ENCODE measurements at regions of chr16 and their contacts with region 1.

Region 1: GRCh38 chr16:81006814-81007696 is at the starts of genes CENPN and CMC2:
- DNase-seq: peak; percentile 88 to 95
- H3K4me3 ChIP-seq: peak within 1 kb of the TSS; percentile 82 to 98 (median 91)
- H3K27ac ChIP-seq: peak within 1 kb of the TSS; percentile 100
- H3K4me1 ChIP-seq: peaks cover 0 to 9% (median 2%) of the 10 kb centered on the region in 4 experiments; a peak in 2 of 7 replicates
- H3K27me3 ChIP-seq: no peaks in the 10 kb centered on the region
- CTCF ChIP-seq: no peak
- EP300 ChIP-seq: peak in 1 of 2 experiments; percentile 99; a peak in 2 of 3 replicates
- POLR2A ChIP-seq: peak; percentile 85 to 97
- RAD21 ChIP-seq: no peak
- total RNA-seq, gene CENPN: 57.2 and 67.0 TPM in 2 replicates
- total RNA-seq, gene CMC2: 66.6 and 69.3 TPM in 2 replicates

Region 2: DNA sequence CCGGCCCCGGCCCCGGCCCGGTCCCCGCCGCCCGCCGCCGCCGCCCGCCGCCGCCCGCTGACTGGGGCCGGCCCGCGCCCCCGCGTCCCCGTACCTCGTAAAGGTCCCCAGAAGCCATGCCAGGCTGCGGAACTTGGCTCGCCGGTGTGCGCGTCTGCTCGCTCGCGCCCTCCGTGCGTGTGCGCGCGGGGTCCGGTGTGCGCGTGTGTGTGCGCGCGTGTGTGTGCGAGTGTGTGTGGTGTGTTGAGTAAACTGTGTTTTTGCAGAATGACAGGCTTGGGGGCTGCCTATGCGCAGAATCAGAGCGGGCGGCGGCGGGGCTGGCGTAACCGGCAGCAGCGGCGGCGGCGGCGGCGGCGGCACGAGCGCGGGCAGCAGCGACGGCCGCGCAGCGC is 203.0 kb before region 1 on chr16:
- CTCF ChIA-PET with region 1: no interaction called
- POLR2A ChIA-PET with region 1: no interaction called
- DNase-seq: peak in 1 of 2 experiments; percentile 65
- H3K4me3 ChIP-seq: peak overlapping the region; percentile 45 to 82 (median 58); a peak in 7 of 8 replicates
- H3K27ac ChIP-seq: no peak overlapping the region
- H3K4me1 ChIP-seq: no peaks in the 10 kb centered on the region; a peak in 1 of 7 replicates
- H3K27me3 ChIP-seq: peaks cover 3 to 27% (median 16%) of the 10 kb centered on the region in 4 experiments
- CTCF ChIP-seq: no peak
- EP300 ChIP-seq: no peak
- POLR2A ChIP-seq: no peak
- RAD21 ChIP-seq: no peak

Region 3: DNA sequence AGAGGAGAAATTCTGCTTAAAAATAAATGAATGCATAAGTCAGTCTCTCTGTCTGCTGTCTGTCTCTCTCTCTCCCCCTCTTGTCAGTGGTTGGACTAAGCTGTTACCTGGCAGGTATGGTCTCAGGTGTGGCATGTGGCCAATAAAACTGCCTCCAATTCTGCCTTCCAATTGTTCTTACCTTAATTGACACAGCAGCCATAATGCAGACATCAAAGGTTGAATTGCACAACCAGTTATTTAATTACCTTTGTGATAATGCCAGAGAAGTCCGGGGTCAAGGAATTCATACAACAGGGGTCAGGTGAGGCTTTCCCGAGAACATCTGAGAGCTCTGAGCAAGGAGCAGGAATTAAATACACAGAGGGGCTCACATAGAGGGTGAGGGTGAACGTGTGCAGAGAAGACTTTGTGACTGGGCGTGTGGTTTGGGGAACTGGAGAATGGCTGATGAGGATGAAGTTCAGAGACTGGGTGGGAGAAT is 123.9 kb before region 1 on chr16:
- CTCF ChIA-PET with region 1: no interaction called
- POLR2A ChIA-PET with region 1: no interaction called
- DNase-seq: no peak
- H3K4me3 ChIP-seq: no peak overlapping the region
- H3K27ac ChIP-seq: no peak overlapping the region
- H3K4me1 ChIP-seq: no peaks in the 10 kb centered on the region
- H3K27me3 ChIP-seq: no peaks in the 10 kb centered on the region
- CTCF ChIP-seq: no peak
- EP300 ChIP-seq: no peak
- POLR2A ChIP-seq: no peak
- RAD21 ChIP-seq: no peak

Region 4: GRCh38 chr16:80993307-80993706 is 13.7 kb before region 1 on chr16:
- CTCF ChIA-PET with region 1: interaction called, 83 read pairs
- POLR2A ChIA-PET with region 1: interaction called, 4 read pairs
- DNase-seq: no peak
- H3K4me3 ChIP-seq: no peak overlapping the region
- H3K27ac ChIP-seq: no peak overlapping the region
- H3K4me1 ChIP-seq: no peaks in the 10 kb centered on the region
- H3K27me3 ChIP-seq: no peaks in the 10 kb centered on the region; a peak in 2 of 7 replicates
- CTCF ChIP-seq: no peak
- EP300 ChIP-seq: no peak
- POLR2A ChIP-seq: no peak
- RAD21 ChIP-seq: no peak

Region 5: GRCh38 chr16:81018496-81018895 is 11.4 kb after region 1 on chr16:
- CTCF ChIA-PET with region 1: interaction called, 13 read pairs
- POLR2A ChIA-PET with region 1: interaction called, 5 read pairs
- DNase-seq: no peak
- H3K4me3 ChIP-seq: no peak overlapping the region
- H3K27ac ChIP-seq: no peak overlapping the region
- H3K4me1 ChIP-seq: no peaks in the 10 kb centered on the region
- H3K27me3 ChIP-seq: no peaks in the 10 kb centered on the region
- CTCF ChIP-seq: no peak
- EP300 ChIP-seq: no peak
- POLR2A ChIP-seq: no peak
- RAD21 ChIP-seq: no peak

Region 6: GRCh38 chr16:81035398-81035974 is 28.4 kb after region 1 on chr16 and contains the start of gene ATMIN:
- CTCF ChIA-PET with region 1: interaction called, 4 read pairs
- POLR2A ChIA-PET with region 1: interaction called, 24 read pairs
- DNase-seq: peak; percentile 80 to 93
- H3K4me3 ChIP-seq: peak within 1 kb of the TSS; percentile 66 to 90 (median 85)
- H3K27ac ChIP-seq: peak within 1 kb of the TSS; percentile 80; the same call in 1 of the 2 replicates
- H3K4me1 ChIP-seq: peaks cover 2 to 6% (median 3%) of the 10 kb centered on the region in 4 experiments; a peak in 5 of 7 replicates
- H3K27me3 ChIP-seq: no peaks in the 10 kb centered on the region
- CTCF ChIP-seq: peak; percentile 95 to 100 (median 96)
- EP300 ChIP-seq: peak in 1 of 2 experiments; percentile 73; a peak in 1 of 3 replicates
- POLR2A ChIP-seq: peak; percentile 46 to 70; a peak in 1 of 3 replicates
- RAD21 ChIP-seq: peak; percentile 59 to 74
- total RNA-seq, gene ATMIN: 55.9 and 59.8 TPM in 2 replicates